ENCODE measurements at regions of chr16 and their contacts with region 1.

Region 1: GRCh38 chr16:77584205-77584859 is 138.0 kb upstream of the NUDT7 start:
- DNase-seq: peak; percentile 22 to 80 (median 51)
- H3K4me3 ChIP-seq: no peak overlapping the region
- H3K27ac ChIP-seq: no peak overlapping the region
- H3K4me1 ChIP-seq: no peaks in the 10 kb centered on the region
- H3K27me3 ChIP-seq: no peaks in the 10 kb centered on the region
- CTCF ChIP-seq: peak; percentile 74 to 91 (median 85)
- POLR2A ChIP-seq: no peak

Region 2: GRCh38 chr16:77236063-77236511 is 348.2 kb before region 1 on chr16:
- intact Hi-C with region 1: loop called (anchors 1 to 5 kb)
- DNase-seq: peak; percentile 80 to 95 (median 89)
- H3K4me3 ChIP-seq: no peak overlapping the region
- H3K27ac ChIP-seq: no peak overlapping the region
- H3K4me1 ChIP-seq: no peaks in the 10 kb centered on the region
- H3K27me3 ChIP-seq: peaks cover 4% of the 10 kb centered on the region
- CTCF ChIP-seq: peak; percentile 98 to 100 (median 100)
- POLR2A ChIP-seq: no peak

Region 3: DNA sequence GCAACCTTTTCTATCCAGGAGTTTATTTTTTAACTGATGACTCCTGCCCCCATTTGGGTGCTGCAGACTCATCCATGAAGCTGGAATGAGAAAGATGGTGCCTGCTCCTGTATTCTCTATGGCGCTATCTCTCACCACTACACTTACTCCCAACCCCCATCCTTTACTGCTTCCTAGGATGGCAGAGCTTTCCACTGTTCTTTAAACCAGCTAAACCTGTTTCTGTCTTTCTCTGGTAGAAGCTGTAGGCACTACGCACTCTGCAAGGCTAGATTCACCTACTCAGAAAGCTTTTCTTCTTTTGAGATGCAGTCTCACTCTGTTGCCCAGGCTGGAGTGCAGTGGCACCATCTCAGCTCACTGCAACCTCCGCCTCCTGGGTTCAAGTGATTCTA is 196.5 kb before region 1 on chr16:
- intact Hi-C with region 1: no loop called
- DNase-seq: no peak
- H3K4me3 ChIP-seq: no peak overlapping the region
- H3K27ac ChIP-seq: no peak overlapping the region
- H3K4me1 ChIP-seq: no peaks in the 10 kb centered on the region
- H3K27me3 ChIP-seq: no peaks in the 10 kb centered on the region
- CTCF ChIP-seq: no peak
- POLR2A ChIP-seq: no peak

Region 4: DNA sequence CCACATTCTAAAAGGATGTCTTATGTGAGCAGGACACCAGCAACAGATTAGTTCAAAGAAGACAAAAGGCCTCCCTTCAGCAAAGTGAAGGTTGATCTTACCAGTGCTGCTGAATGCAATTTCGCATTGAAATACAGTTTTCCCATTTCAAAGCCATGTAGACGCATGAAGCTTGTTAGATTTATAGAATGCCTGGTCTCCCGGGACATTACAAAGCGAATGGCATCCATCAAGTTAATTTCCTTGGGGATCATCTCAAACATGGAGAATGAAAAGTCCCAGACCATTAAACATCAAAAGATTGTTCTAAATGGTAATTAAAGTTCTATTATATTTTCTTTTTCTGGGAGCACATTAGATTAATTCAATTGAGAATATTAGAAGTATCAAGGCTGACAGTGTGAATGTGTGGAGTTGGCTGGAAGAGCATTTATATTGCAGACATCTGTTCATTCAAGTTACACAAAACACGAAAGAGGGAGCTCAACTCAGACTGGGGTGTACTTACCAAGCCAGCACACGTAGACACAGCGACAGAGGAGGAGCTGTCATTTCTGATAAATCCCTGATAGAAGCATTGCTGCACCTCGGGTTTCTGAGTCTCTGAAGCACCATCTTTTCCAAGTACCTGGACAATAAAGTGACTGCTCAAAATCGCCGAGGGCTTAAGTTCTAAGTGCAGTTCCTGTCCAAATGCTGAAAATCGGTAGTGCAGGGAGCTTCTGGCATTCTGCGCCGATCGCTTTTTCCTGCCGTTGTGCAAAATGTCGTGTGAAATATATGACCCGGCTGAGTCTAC is 153.3 kb before region 1 on chr16:
- intact Hi-C with region 1: no loop called
- DNase-seq: no peak
- H3K4me3 ChIP-seq: no peak overlapping the region
- H3K27ac ChIP-seq: no peak overlapping the region
- H3K4me1 ChIP-seq: no peaks in the 10 kb centered on the region
- H3K27me3 ChIP-seq: peaks cover 22% of the 10 kb centered on the region
- CTCF ChIP-seq: no peak
- POLR2A ChIP-seq: no peak

Region 5: DNA sequence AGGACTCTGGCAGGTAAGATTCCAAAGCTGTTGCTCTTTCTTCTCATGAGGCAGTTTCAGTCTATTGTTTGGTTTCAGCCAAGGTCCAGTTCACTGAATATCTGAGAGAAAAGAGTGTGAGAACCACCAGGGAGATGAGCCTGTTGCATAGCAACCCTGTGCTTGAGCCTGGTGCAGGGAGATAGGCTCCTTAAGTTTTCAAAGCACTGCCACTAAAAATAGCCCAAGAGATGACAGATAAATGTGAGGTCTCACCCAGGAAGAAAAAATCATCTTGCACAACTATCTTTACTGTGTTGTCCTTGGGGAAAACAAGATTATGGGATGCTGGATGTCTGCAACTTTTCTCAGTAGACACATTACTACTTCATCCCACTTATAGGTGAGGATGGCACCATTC is 111.8 kb after region 1 on chr16:
- intact Hi-C with region 1: no loop called
- DNase-seq: no peak
- H3K4me3 ChIP-seq: no peak overlapping the region
- H3K27ac ChIP-seq: no peak overlapping the region
- H3K4me1 ChIP-seq: no peaks in the 10 kb centered on the region
- H3K27me3 ChIP-seq: no peaks in the 10 kb centered on the region
- CTCF ChIP-seq: no peak
- POLR2A ChIP-seq: no peak